HepG2 (cell line): ENCODE measurements at regions of chr1 and their contacts with region 1.

Region 1: GRCh38 chr1:221435504-221435904 is 306.4 kb downstream of the DUSP10 start:
- DNase-seq: peak; percentile 17
- ATAC-seq: peak; percentile 70
- H3K4me3 ChIP-seq: no peak overlapping the region
- H3K27ac ChIP-seq: no peak overlapping the region
- H3K4me1 ChIP-seq: no peaks in the 10 kb centered on the region
- H3K27me3 ChIP-seq: no peaks in the 10 kb centered on the region
- CTCF ChIP-seq: peak; percentile 74
- EP300 ChIP-seq: no peak
- POLR2A ChIP-seq: no peak
- RAD21 ChIP-seq: no peak

Region 2: DNA sequence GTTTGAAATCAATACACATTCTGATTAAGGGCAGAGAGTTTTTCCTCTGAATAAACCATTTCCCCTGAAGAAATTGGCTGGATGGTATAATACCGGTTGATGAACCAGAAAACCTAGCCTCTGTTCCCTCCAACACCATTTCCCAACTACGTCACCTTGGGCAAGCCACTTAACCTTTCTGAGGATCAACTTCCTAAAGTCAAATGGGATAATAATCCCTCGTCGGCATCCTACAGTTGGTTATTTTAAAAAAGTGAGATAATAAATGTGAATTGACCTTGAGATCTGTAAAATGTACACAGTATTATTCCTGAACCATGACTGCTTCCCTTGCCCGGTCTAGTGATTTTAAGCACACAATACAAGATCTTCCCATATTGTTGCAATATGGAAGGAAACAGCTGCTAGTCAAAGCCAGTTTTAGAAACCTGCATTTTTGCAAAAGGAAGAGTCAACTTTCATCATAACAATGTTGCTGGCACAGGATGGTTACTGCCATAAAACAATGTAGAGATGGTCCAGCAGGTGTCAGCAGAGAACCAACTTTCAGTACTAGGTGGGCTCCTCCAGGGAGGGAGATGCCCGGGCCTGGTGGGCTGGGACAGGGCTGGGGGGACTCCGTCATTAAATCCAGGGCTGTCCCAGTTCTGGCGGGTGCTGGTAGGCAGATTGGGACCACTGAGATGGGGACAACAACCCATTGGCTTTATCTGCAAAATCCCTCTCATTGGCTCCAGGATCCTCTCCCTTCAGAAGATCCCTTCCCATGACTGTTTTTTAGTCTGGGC is 561.4 kb before region 1 on chr1:
- CTCF ChIA-PET with region 1: interaction called, 5 read pairs
- POLR2A ChIA-PET with region 1: no interaction called
- in situ Hi-C with region 1: loop called (anchors 5 kb)
- intact Hi-C with region 1: no loop called
- DNase-seq: peak; percentile 32
- ATAC-seq: peak; percentile 77
- H3K4me3 ChIP-seq: no peak overlapping the region
- H3K27ac ChIP-seq: no peak overlapping the region
- H3K4me1 ChIP-seq: peaks cover 25% of the 10 kb centered on the region
- H3K27me3 ChIP-seq: peaks cover 0 to 9% of the 10 kb centered on the region in 2 experiments; a peak in 1 of 5 replicates
- CTCF ChIP-seq: peak; percentile 81
- EP300 ChIP-seq: no peak
- POLR2A ChIP-seq: no peak
- RAD21 ChIP-seq: peak; percentile 60

Region 3: DNA sequence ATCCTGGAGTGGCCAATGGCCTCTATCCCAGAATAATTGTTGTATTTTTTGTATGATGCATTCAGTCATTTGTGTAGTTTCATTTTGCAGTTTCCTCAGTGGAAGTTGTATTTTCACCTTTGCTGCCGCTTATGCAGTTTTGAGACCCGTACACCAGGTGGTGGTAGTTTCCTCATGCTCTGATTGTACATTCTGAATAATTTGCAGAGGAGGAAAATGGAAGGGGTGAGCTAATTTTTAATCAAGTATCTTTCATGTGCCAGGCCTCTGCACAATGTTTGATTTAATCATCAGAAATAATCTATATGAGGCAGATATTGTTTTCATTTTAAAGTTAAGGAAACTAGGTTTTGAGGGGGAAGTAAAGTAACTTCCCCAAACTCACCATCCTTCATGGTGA is 526.7 kb before region 1 on chr1:
- CTCF ChIA-PET with region 1: no interaction called
- POLR2A ChIA-PET with region 1: no interaction called
- in situ Hi-C with region 1: no loop called
- intact Hi-C with region 1: loop called (anchors 2 kb)
- DNase-seq: no peak
- ATAC-seq: peak; percentile 57; the same call in 1 of the 3 replicates
- H3K4me3 ChIP-seq: no peak overlapping the region
- H3K27ac ChIP-seq: no peak overlapping the region
- H3K4me1 ChIP-seq: no peaks in the 10 kb centered on the region
- H3K27me3 ChIP-seq: peaks cover 2 to 31% of the 10 kb centered on the region in 2 experiments; a peak in 3 of 5 replicates
- CTCF ChIP-seq: peak; percentile 54
- EP300 ChIP-seq: no peak
- POLR2A ChIP-seq: no peak
- RAD21 ChIP-seq: 0 out of 2 replicates have a peak, but pooled peaks have one; percentile 22

Region 4: GRCh38 chr1:221263831-221264767 is 171.4 kb before region 1 on chr1:
- CTCF ChIA-PET with region 1: interaction called, 3 read pairs
- POLR2A ChIA-PET with region 1: no interaction called
- in situ Hi-C with region 1: no loop called
- intact Hi-C with region 1: loop called (anchors 1 kb)
- DNase-seq: peak; percentile 52
- ATAC-seq: peak; percentile 80
- H3K4me3 ChIP-seq: no peak overlapping the region
- H3K27ac ChIP-seq: no peak overlapping the region
- H3K4me1 ChIP-seq: no peaks in the 10 kb centered on the region
- H3K27me3 ChIP-seq: no peaks in the 10 kb centered on the region
- CTCF ChIP-seq: peak; percentile 65
- EP300 ChIP-seq: no peak
- POLR2A ChIP-seq: no peak
- RAD21 ChIP-seq: no peak